Activated naive CD4-positive, alpha-beta T cell treated with anti-CD3 and anti-CD28 coated beads for 36 hours (primary cell): ENCODE measurements at regions of chr17 and their contacts with region 1.

Region 1: DNA sequence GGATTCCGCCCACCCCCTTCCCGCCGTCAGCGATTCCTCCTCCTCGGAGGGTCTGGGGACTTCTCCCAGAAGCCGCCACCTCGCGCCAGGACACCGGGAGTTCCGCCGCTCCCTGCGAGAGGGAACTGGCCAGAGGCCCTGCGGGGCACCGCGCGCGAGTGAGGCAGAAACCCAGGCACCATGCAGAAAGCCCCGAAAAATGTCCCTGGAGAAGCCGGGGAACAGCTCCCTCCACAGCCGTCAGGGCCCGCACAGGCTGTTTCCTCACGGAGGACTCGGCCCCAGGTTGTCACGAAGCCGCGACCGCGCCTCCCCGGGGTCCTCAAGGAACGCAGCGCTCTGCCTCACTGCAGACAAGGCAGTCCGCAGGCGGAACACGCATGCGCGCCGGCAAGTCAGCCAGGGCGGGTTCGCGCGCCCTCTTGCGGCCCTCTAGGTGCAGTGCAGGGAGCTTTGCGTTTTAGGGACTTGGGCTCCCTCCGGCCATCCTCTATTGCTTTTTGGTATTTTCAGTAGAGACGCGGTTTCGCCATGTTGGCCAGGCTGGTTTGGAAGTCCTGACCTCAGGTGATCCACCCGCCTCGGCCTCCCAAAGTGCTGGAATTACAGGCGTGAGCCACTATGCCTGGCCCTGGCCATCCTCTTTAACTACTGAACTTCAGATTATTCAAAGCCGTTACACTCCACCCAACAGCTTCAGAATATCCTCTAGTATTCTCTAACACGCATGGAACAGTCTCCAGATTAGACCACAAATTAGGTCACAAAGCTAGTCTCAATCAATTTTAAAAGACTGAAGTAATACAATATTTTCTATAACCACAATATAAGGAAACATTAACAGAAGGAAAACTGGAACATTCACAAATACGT is 20.3 kb upstream of the ZNF287 start:
- DNase-seq: peak; percentile 94
- H3K4me3 Mint-ChIP-seq: peak overlapping the region; percentile 69
- H3K27ac Mint-ChIP-seq: no peak overlapping the region
- H3K4me1 Mint-ChIP-seq: peaks cover 3% of the 10 kb centered on the region
- H3K27me3 Mint-ChIP-seq: peaks cover 22% of the 10 kb centered on the region

Region 2: GRCh38 chr17:16380640-16381495 is 208.5 kb before region 1 on chr17 and contains the start of gene UBB:
- CTCF ChIA-PET with region 1: interaction called, 3 read pairs
- intact Hi-C with region 1: loop called (anchors 5 kb)
- DNase-seq: peak; percentile 96
- H3K4me3 Mint-ChIP-seq: peak within 1 kb of the TSS; percentile 90
- H3K27ac Mint-ChIP-seq: peak within 1 kb of the TSS; percentile 96
- H3K4me1 Mint-ChIP-seq: peaks cover 35% of the 10 kb centered on the region
- H3K27me3 Mint-ChIP-seq: no peaks in the 10 kb centered on the region
- total RNA-seq, gene UBB: 1,579 to 1,628 TPM

Region 3: DNA sequence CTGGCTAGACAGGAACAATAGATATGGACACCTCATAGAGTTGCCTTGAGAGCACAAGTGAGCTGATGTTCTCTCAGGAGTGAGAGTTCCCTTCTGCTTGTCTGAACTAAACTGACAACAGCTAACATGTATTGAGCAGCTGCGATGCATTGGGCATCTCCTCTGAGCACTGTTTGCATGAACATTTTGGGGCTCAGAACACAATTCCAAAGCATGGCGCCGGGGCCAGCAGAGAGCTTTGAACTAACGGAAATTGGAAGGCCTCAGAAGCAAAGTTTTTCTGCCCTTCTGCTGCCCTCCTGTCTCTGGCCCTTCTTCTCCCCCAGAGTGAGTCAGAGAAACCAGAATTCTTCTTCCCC is 135.9 kb before region 1 on chr17:
- CTCF ChIA-PET with region 1: interaction called, 3 read pairs
- intact Hi-C with region 1: loop called (anchors 1 kb)
- DNase-seq: no peak
- H3K4me3 Mint-ChIP-seq: no peak overlapping the region
- H3K27ac Mint-ChIP-seq: no peak overlapping the region
- H3K4me1 Mint-ChIP-seq: peaks cover 11% of the 10 kb centered on the region
- H3K27me3 Mint-ChIP-seq: no peaks in the 10 kb centered on the region

Region 4: DNA sequence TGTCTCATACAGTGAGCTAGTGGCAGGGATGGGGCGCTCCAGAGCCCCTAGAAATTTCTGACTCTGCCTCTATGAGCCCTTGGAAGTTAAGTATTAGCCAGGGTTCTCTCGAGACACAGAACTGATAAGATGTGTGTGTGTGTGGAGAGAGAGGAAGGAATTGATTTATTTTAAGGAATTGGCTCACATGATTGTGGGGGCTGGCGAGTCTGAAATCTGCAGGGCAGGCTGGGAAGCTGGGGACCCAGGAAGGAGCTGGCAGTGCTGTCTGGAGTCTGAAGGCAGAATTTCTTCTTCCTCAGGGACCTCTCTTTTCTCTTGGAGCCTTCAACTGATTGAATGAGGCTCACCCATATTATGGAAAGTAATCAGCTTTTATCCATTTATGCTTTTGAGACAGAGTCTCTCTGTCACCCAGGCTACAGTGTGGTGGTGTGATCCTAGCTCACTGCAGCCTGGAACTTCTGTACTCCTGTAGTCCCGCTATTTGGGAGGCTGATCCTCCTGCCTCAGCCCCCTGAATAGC is 114.1 kb before region 1 on chr17:
- CTCF ChIA-PET with region 1: interaction called, 10 read pairs
- intact Hi-C with region 1: no loop called
- DNase-seq: no peak
- H3K4me3 Mint-ChIP-seq: no peak overlapping the region
- H3K27ac Mint-ChIP-seq: no peak overlapping the region
- H3K4me1 Mint-ChIP-seq: no peaks in the 10 kb centered on the region
- H3K27me3 Mint-ChIP-seq: no peaks in the 10 kb centered on the region

Region 5: DNA sequence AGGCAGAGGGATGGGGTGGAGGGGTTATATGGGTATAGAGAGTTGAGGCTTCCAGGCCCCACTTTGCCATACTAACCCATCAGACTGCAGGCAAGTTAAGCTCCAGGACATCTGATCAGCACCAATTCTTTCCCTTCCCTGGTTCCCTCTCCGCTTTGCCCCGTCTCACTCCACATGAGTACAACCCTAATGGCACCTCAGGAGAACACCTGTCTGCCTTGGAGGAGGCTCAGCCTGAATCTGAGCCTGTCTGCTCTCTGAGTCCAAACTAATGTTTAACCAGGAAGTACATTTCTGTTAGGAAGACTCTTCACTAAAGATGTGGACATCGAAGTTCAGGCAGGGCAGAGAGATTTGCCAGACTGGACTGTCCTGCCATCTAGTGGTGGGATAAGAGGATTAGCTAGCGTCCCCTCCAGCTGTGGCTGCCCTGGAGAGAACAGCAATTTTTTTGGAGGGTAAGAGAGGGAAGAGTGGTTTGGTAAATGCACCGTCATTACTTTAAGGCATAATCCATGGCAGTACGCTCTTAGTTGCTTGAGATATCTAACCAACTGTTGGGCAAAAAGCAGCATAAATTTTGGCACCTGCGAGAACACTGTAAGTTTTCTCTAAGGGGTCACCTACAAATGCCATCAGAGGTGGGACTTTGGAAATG is 68.1 kb before region 1 on chr17:
- CTCF ChIA-PET with region 1: no interaction called
- intact Hi-C with region 1: no loop called
- DNase-seq: peak; percentile 82
- H3K4me3 Mint-ChIP-seq: no peak overlapping the region
- H3K27ac Mint-ChIP-seq: no peak overlapping the region
- H3K4me1 Mint-ChIP-seq: no peaks in the 10 kb centered on the region
- H3K27me3 Mint-ChIP-seq: peaks cover 26% of the 10 kb centered on the region

Region 6: DNA sequence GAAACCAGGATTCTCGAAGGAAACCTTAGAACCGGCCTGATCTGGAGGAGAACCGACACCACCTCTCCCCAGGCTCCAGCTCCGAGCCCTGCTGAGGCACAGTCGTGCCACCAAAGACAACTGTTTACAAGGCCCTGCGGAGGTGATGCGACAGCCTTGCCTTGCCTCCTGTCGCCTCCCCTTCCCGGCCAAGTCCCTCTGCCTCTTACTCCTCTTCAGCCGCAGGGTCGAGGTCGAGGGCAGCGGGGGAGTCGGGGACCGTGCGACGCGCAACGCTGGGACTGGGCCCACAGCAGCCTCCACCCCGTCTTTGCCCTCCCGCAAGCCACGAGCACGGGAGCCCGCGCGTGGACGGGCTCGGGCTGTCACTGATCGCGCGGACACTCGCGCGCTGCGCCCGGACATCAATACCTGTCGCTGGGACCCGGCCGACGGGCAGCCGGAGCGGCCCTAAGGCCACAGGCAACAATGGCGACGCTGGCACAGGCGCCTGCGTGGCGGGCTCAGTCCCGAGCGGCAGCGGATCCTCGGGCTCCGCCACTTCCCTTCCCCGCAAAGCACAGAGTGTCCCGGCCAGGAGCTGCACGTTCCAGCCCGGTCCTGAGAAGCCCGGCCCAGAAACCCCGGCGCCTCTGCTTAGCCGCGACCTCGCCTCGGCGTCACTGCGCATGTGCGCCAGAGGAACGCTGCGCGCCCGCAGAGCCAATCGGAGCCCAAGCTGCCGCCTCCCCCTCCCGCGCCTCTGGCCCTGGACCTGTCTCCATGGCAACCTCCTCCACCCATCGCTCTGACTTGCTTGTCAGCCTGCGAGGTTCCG is 20.6 kb before region 1 on chr17 and contains the start of gene ZNF287:
- CTCF ChIA-PET with region 1: interaction called, 17 read pairs
- intact Hi-C with region 1: loop called (anchors 1 kb)
- DNase-seq: peak; percentile 94
- H3K4me3 Mint-ChIP-seq: peak within 1 kb of the TSS; percentile 80
- H3K27ac Mint-ChIP-seq: no peak within 1 kb of the TSS
- H3K4me1 Mint-ChIP-seq: peaks cover 13% of the 10 kb centered on the region
- H3K27me3 Mint-ChIP-seq: no peaks in the 10 kb centered on the region
- total RNA-seq, gene ZNF287: 5.1 to 6.3 TPM

Region 7: GRCh38 chr17:16653209-16654041 is 64.1 kb after region 1 on chr17 and contains the start of gene ZNF624:
- CTCF ChIA-PET with region 1: interaction called, 9 read pairs
- intact Hi-C with region 1: loop called (anchors 2 kb)
- DNase-seq: peak; percentile 91
- H3K4me3 Mint-ChIP-seq: peak within 1 kb of the TSS; percentile 82
- H3K27ac Mint-ChIP-seq: peak within 1 kb of the TSS; percentile 33
- H3K4me1 Mint-ChIP-seq: peaks cover 17% of the 10 kb centered on the region
- H3K27me3 Mint-ChIP-seq: peaks cover 2% of the 10 kb centered on the region
- total RNA-seq, gene ZNF624: 3.9 TPM

Region 8: DNA sequence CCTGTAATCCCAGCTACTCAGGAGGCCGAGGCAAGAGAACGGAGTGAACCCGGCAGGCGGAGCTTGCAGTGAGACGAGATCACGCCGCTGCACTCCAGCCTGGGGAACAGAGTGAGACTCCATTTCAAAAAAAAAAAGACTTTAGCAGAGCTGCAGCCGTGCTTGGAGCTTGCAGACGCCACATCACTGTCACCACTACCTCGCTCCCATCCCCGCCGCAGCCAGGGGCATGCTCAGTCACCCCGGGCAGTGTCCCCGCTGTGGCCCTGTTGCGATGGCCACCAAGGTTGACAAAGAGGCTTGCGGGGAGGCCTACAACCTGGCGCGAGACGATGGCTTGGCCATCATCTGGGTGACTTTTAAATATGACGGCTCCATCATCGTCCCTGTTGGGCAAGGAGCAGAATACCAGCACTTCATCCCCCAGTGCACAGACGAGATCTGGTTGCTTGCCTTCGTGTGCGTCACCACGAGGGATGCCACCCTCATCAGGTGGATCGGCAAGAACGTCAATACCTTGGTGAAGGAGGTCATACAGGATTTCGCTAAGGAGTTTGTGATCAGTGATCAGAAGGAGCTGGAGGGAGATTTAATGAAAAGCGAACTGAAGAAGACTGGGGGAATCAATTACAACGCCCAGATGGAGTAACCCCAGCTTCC is 264.5 kb after region 1 on chr17:
- CTCF ChIA-PET with region 1: no interaction called
- intact Hi-C with region 1: no loop called
- DNase-seq: no peak
- H3K4me3 Mint-ChIP-seq: no peak overlapping the region
- H3K27ac Mint-ChIP-seq: no peak overlapping the region
- H3K4me1 Mint-ChIP-seq: no peaks in the 10 kb centered on the region
- H3K27me3 Mint-ChIP-seq: no peaks in the 10 kb centered on the region

Region 9: DNA sequence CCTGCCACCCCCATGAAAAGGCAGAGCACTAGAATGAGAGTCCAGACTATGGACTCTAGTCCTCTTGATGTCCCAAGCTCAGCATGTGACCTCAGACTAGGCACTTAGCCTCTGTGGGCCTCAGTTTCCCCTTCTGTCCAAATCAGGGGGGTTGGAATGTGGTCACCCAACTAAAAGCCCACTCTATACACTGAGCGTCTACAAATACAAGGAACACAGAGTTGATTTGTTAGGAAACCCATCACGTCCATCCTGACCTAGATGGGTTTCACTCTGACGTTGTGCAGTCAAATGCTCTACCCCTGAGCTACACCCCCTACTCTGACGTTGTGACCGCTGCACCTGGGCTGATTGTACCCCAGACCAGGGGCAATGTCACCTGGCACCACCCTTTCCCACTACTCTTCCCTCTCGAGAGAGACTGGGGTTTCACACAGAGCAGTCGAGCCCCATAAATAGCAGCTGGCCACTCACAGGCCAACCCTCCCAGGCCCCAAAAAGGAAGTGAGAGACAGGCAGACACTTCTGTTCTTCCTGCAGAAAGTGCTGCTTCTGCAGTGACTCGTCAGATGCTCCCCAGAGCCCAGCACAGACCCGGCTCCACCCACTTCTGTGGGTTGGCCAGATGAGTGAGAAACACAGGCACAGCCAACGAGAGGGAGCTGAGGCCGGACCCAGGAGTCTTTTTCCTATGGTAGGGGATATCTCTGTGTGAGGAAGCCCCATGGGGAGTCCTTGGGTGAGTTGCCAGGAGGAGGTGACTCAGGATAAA is 398.7 kb after region 1 on chr17:
- CTCF ChIA-PET with region 1: interaction called, 3 read pairs
- intact Hi-C with region 1: loop called (anchors 1 kb)
- DNase-seq: peak; percentile 71
- H3K4me3 Mint-ChIP-seq: no peak overlapping the region
- H3K27ac Mint-ChIP-seq: no peak overlapping the region
- H3K4me1 Mint-ChIP-seq: peaks cover 30% of the 10 kb centered on the region
- H3K27me3 Mint-ChIP-seq: no peaks in the 10 kb centered on the region